H1 (cell line): ENCODE measurements at regions of chr2 and their contacts with region 1.

Region 1: GRCh38 chr2:207248702-207249377 is 83.1 kb upstream of the KLF7 start:
- DNase-seq: no peak
- H3K4me3 ChIP-seq: no peak overlapping the region
- H3K27ac ChIP-seq: no peak overlapping the region
- H3K4me1 ChIP-seq: peaks cover 0 to 7% (median 5%) of the 10 kb centered on the region in 4 experiments; a peak in 5 of 7 replicates
- H3K27me3 ChIP-seq: no peaks in the 10 kb centered on the region
- CTCF ChIP-seq: no peak
- EP300 ChIP-seq: no peak
- POLR2A ChIP-seq: no peak
- RAD21 ChIP-seq: no peak

Region 2: GRCh38 chr2:206823178-206823577 is 425.7 kb before region 1 on chr2:
- CTCF ChIA-PET with region 1: no interaction called
- POLR2A ChIA-PET with region 1: no interaction called
- DNase-seq: no peak
- H3K4me3 ChIP-seq: no peak overlapping the region
- H3K27ac ChIP-seq: no peak overlapping the region
- H3K4me1 ChIP-seq: peaks cover 0 to 3% (median 0%) of the 10 kb centered on the region in 4 experiments; a peak in 2 of 7 replicates
- H3K27me3 ChIP-seq: peaks cover 0 to 1% (median 0%) of the 10 kb centered on the region in 4 experiments; a peak in 1 of 7 replicates
- CTCF ChIP-seq: no peak
- EP300 ChIP-seq: no peak
- POLR2A ChIP-seq: no peak
- RAD21 ChIP-seq: no peak

Region 3: GRCh38 chr2:207230261-207231105 is 18.4 kb before region 1 on chr2:
- CTCF ChIA-PET with region 1: interaction called, 12 read pairs
- POLR2A ChIA-PET with region 1: interaction called, 3 read pairs
- DNase-seq: peak in 1 of 2 experiments; percentile 62
- H3K4me3 ChIP-seq: no peak overlapping the region
- H3K27ac ChIP-seq: no peak overlapping the region
- H3K4me1 ChIP-seq: peaks cover 8 to 22% (median 18%) of the 10 kb centered on the region in 4 experiments
- H3K27me3 ChIP-seq: no peaks in the 10 kb centered on the region
- CTCF ChIP-seq: peak; percentile 31 to 79 (median 61); a peak in 3 of 4 replicates
- EP300 ChIP-seq: no peak
- POLR2A ChIP-seq: no peak
- RAD21 ChIP-seq: peak; percentile 59 to 64